PC-3 (cell line): ENCODE measurements at regions of chr12 and their contacts with region 1.

Region 1: GRCh38 chr12:121668750-121669520 is 519 bp downstream of the MORN3 start:
- DNase-seq: peak; percentile 61
- ATAC-seq: no peak
- H3K4me3 ChIP-seq: no peak overlapping the region
- H3K27ac ChIP-seq: no peak overlapping the region
- H3K4me1 ChIP-seq: peaks cover 10% of the 10 kb centered on the region
- H3K27me3 ChIP-seq: no peaks in the 10 kb centered on the region
- CTCF ChIP-seq: peak; percentile 88

Region 2: DNA sequence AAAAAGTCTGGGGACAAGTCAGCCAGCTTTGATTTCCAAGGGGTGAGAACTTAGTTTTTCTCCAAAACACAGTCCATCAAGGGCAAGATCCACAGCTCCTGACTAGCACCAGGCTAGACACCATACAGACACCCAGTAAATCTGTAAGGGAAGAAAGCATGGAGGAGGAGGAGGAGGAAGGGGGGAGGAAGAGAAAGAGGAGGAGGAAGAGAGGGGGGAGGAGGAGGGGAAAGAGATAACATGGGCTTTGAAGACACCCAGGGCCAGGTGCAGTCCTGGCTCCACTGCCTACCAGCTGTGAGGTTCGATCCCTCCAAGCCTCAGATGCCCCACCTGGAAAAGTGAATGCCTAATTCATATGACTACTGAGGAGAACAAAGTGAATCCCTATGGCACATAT is 106.4 kb before region 1 on chr12:
- CTCF ChIA-PET with region 1: no interaction called
- POLR2A ChIA-PET with region 1: interaction called, 35 read pairs
- intact Hi-C with region 1: no loop called
- DNase-seq: no peak
- ATAC-seq: no peak
- H3K4me3 ChIP-seq: no peak overlapping the region
- H3K27ac ChIP-seq: no peak overlapping the region
- H3K4me1 ChIP-seq: no peaks in the 10 kb centered on the region
- H3K27me3 ChIP-seq: no peaks in the 10 kb centered on the region
- CTCF ChIP-seq: no peak

Region 3: DNA sequence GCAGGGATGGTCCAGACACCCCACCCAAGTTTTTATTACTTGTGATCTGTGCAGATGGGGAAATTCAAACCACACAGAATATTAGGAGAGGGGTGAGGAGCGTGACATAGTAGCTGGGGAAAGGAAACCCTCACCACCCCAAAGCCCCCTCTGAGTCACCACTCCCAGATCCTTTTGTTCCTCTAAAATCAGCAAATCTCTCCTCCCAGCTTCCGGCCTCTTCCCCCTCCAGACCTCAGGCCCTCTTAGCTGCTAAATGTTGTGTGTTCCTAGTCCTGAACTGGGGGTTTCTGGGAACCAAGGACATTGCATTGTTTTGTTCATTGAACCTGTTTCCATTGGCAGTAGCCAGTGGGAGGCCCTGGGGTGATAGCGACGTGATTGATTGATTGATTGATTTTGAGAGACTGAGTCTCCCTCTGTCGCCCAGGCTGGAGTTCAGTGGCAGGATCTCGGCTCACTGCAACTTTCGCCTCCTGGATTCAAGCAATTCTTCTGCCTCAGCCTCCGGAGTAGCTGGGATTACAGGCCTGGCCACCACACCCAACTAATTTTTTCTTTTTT is 48.5 kb before region 1 on chr12:
- CTCF ChIA-PET with region 1: no interaction called
- POLR2A ChIA-PET with region 1: no interaction called
- intact Hi-C with region 1: no loop called
- DNase-seq: no peak
- ATAC-seq: no peak
- H3K4me3 ChIP-seq: no peak overlapping the region
- H3K27ac ChIP-seq: no peak overlapping the region
- H3K4me1 ChIP-seq: peaks cover 5% of the 10 kb centered on the region
- H3K27me3 ChIP-seq: no peaks in the 10 kb centered on the region
- CTCF ChIP-seq: no peak